Common myeloid progenitor, CD34-positive (primary cell): ENCODE measurements at regions of chr4 and their contacts with region 1.

Region 1: DNA sequence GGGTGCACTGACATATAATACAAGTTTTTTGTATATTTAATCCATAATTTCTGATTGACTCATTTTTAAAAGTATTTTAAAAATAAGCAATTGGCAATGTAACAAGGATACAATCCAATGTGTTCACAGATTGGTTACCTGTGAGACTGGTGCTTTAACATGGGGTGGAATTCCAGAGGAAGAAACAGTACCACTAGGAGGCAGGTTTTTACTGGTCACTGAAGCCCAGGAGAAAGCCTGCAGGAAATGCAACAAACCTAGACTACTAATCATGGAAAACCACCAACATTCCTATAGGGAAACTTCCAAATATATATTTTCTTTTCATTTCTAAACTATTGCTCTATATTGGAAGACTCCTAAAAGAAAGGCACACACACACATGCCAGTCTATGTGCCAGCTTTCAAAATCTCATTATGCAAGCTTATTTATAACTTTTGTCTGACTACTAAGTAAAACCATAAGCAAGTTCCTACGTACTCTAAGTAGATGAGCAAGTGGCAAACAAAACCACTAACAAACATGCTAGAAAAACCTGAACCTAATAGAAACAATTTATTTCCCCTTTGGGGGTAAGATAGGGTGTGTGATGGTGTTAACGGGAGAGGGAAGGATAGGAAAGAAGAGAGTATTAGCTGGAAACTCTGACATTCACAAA is 19.2 kb downstream of the G3BP2 start:
- DNase-seq: peak; percentile 24 to 46 (median 41)
- H3K4me3 ChIP-seq: no peak overlapping the region
- H3K27ac ChIP-seq: no peak overlapping the region
- H3K4me1 ChIP-seq: no peaks in the 10 kb centered on the region
- H3K27me3 ChIP-seq: no peaks in the 10 kb centered on the region

Region 2: DNA sequence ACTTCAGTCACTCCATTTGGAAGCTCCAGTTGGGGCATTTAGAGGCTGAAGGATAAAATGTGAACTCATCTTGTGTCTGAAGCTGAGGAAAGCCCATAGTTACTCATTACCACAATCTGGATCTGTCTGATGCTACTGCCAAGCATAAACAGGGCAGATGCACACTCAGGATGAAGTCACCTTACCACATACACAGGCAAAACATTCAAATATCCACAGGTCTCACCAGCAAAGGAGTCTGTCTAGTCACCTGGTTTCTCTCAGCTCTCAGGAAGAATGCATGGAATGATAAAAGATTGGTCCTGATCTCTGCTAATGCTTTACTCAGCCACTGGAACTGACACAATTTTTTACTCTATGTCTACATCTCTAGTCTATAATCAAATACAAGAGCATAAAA is 111.2 kb before region 1 on chr4:
- CTCF ChIA-PET with region 1: no interaction called
- POLR2A ChIA-PET with region 1: no interaction called
- DNase-seq: no peak
- H3K4me3 ChIP-seq: no peak overlapping the region
- H3K27ac ChIP-seq: no peak overlapping the region
- H3K4me1 ChIP-seq: no peaks in the 10 kb centered on the region
- H3K27me3 ChIP-seq: no peaks in the 10 kb centered on the region

Region 3: GRCh38 chr4:75673027-75673958 is 19.3 kb after region 1 on chr4 and contains the start of gene G3BP2:
- CTCF ChIA-PET with region 1: interaction called, 14 read pairs
- POLR2A ChIA-PET with region 1: interaction called, 3 read pairs
- DNase-seq: peak; percentile 99 to 100 (median 100)
- H3K4me3 ChIP-seq: peak within 1 kb of the TSS; percentile 95 to 100 (median 98)
- H3K27ac ChIP-seq: peak within 1 kb of the TSS; percentile 94 to 98
- H3K4me1 ChIP-seq: peaks cover 24 to 33% (median 31%) of the 10 kb centered on the region in 4 experiments
- H3K27me3 ChIP-seq: no peaks in the 10 kb centered on the region

Region 4: DNA sequence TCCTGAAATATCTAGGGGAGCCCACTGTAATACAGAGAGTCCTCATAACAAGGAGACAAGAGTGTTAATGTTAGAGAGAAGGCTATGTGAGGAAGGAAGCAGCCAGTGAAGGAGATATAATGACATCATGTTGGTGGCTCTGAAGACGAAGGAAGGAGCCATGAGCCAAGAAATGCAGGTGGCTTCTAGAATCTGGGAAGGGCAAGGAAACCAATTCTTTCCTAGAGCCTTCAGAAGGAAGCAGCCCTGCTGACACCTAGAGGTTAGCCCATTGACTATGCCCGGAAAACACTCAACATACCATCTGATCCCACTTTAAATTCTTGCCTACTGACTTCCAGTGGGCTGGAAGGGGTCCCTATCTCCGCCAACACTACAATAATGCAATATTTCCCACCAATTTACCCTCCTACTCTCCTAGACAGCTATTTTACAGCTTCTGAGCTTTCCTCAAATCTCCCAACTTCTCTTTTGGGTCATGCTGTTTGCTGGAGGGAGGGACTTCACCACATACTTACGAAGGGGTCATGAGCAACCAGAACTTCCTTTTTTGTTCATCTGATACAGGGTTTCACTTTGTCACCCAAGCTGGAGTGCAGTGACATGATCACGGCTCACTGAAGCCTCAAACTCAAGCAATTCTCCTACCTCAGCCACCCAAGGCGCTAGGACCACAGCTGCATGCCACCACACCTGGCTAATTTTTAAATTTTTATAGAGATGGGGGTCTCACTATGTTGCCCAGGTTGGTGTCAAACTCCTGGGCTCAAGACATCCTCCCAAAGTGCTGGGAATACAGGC is 44.4 kb after region 1 on chr4:
- CTCF ChIA-PET with region 1: interaction called, 18 read pairs
- POLR2A ChIA-PET with region 1: interaction called, 3 read pairs
- DNase-seq: peak; percentile 77 to 95 (median 92)
- H3K4me3 ChIP-seq: peak overlapping the region in 5 of 7 experiments; percentile 2 to 65 (median 32)
- H3K27ac ChIP-seq: peak overlapping the region; percentile 35 to 75
- H3K4me1 ChIP-seq: peaks cover 6 to 25% (median 16%) of the 10 kb centered on the region in 4 experiments
- H3K27me3 ChIP-seq: no peaks in the 10 kb centered on the region

Region 5: GRCh38 chr4:75708218-75708691 is 54.3 kb after region 1 on chr4:
- CTCF ChIA-PET with region 1: interaction called, 35 read pairs
- POLR2A ChIA-PET with region 1: interaction called, 5 read pairs
- DNase-seq: peak; percentile 41 to 60 (median 54)
- H3K4me3 ChIP-seq: no peak overlapping the region
- H3K27ac ChIP-seq: no peak overlapping the region
- H3K4me1 ChIP-seq: peaks cover 0 to 10% (median 6%) of the 10 kb centered on the region in 4 experiments
- H3K27me3 ChIP-seq: no peaks in the 10 kb centered on the region

Region 6: GRCh38 chr4:75715105-75715799 is 61.3 kb after region 1 on chr4:
- CTCF ChIA-PET with region 1: interaction called, 35 read pairs
- POLR2A ChIA-PET with region 1: interaction called, 5 read pairs
- DNase-seq: peak in 1 of 3 donors; percentile 22
- H3K4me3 ChIP-seq: peak overlapping the region in 2 of 7 experiments; percentile 4 to 31
- H3K27ac ChIP-seq: peak overlapping the region in 1 of 2 experiments; percentile 39
- H3K4me1 ChIP-seq: peaks cover 0 to 14% (median 11%) of the 10 kb centered on the region in 4 experiments
- H3K27me3 ChIP-seq: no peaks in the 10 kb centered on the region

Region 7: DNA sequence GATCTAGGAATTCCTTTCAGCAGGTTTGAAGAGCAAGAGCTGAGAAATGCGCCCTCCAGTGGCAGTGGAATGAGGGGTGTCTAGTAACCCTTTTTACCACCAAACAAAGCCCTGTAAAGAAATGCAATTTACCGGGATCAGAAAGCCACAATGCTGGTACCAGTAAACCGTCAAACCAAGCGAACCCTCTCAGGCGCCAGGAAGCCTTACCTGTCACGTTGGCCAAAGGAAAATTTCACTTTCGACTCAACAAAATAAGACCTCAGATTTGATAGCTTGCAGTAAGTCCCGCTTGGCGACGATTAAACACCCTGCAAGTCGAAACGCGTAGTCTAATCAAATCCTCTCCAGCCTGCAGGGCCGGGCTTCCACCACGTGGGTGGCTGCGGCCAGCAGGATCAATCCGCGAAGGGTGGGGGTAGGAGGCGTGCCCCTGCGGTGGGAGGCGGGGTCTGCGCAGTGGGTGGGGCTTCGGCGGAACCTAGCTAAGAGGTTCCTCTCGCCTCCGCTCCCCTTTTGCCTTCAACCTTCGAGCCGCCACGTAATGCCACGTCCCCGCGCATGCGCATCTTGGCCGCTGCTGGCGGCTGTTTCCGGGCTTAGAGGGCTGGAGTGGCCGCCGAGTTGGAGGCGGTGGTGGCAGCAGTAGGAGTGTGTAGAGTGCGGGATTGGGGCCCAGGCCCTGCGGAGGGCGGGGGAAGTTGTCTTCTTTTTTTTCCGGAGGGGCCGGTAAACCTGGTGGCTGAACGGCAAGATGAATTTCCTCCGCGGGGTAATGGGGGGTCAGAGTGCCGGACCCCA is 70.3 kb after region 1 on chr4 and contains the start of gene USO1:
- CTCF ChIA-PET with region 1: interaction called, 19 read pairs
- POLR2A ChIA-PET with region 1: interaction called, 5 read pairs
- DNase-seq: peak; percentile 99 to 100 (median 99)
- H3K4me3 ChIP-seq: peak within 1 kb of the TSS; percentile 91 to 99 (median 97)
- H3K27ac ChIP-seq: peak within 1 kb of the TSS; percentile 95
- H3K4me1 ChIP-seq: peaks cover 10 to 39% (median 33%) of the 10 kb centered on the region in 4 experiments
- H3K27me3 ChIP-seq: no peaks in the 10 kb centered on the region